ENCODE measurements at regions of chr7 and their contacts with region 1.

Region 1: DNA sequence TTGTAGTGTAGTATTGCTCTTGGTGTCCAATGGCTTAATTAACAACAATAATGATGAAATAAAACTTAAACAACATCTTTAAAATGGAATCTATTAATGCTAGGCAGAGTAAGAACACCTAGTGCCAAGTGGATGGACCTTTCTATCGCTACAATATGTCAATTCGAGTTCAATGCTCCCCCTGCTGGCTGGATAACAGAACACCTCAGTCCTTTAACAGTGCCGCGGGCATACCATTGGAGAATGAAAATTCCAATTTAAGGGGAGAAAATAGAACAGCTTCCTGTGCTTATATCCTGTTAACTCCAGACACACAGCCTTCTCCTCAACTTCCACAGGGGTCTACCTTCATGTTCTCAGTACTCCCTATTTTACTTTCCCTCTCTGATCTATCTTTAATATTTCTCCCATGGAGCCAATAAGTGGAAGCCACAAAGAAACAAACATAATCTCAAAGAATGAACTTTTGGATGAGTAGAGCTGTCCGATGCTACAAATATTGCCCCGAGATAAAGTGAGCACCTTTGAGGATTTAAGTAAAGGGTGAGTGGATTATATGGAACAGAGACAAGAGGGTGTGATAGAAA is 41.4 kb downstream of the COL1A2 start:
- DNase-seq: peak; percentile 69
- H3K4me3 ChIP-seq: no peak overlapping the region
- H3K27ac ChIP-seq: no peak overlapping the region
- H3K4me1 ChIP-seq: no peaks in the 10 kb centered on the region
- H3K27me3 ChIP-seq: peaks cover 0 to 4% of the 10 kb centered on the region in 2 experiments
- CTCF ChIP-seq: peak; percentile 73 to 83
- POLR2A ChIP-seq: no peak

Region 2: DNA sequence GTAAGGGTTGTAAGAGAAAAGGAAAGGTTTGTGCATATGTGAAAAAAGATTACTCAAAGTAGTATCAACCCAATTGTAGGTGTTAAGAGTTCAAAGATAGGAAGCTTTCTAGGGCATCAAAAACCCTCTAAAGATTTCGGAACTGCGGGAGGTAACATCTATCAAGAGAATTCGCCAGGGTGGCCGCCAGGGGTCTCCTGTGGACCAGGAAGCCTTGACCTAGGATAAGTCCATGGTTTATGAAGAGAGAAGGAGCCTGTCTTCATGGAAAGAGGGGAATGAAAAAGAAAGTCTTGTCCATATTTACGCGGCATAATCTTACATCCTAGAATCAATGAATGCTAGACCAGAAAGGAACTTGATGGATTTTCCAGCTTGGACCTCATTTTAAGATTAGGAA is 720.9 kb before region 1 on chr7:
- CTCF ChIA-PET with region 1: no interaction called
- POLR2A ChIA-PET with region 1: no interaction called
- dilution Hi-C with region 1: no loop called
- intact Hi-C with region 1: loop called (anchors 2 kb)
- DNase-seq: peak; percentile 58
- H3K4me3 ChIP-seq: no peak overlapping the region
- H3K27ac ChIP-seq: no peak overlapping the region
- H3K4me1 ChIP-seq: no peaks in the 10 kb centered on the region
- H3K27me3 ChIP-seq: peaks cover 15 to 26% of the 10 kb centered on the region in 2 experiments
- CTCF ChIP-seq: peak; percentile 71 to 72
- POLR2A ChIP-seq: no peak

Region 3: DNA sequence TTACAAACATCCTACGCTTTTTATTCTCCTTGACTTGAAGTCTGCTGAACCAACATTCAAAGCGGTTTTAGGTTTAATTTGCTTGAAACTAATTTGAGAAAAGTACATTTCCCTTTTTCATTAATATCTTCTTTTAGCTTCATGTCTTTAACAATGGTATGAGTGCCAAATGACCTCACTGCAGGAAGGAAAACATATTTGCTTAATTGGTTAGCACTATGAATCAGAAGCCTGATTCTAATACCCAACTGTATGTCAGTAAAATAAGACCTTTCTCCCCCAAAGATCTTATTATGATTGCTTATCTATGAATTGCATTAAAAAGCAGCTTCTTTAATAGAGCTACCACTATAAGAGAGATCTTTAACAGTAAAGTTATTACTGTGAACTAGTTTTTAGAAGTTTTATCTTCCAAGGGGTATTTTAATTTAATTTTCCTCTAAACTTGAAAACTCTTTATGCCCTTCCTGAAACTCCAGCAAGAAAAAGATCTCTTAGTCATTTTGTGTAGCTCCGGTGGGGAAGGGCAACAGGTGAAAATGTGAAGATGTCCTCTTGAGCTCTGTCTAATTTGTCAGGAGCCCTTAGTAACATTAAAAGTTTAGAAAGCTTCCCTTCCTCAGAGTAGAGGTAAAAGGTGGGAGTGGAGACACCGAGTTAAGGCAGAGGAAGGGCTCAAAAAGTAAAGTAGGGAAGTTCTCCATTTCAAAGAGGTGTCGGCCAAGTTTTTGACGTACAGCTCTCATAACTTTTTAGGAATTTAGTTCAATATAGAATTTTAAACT is 35.3 kb before region 1 on chr7:
- CTCF ChIA-PET with region 1: interaction called, 52 read pairs
- POLR2A ChIA-PET with region 1: no interaction called
- dilution Hi-C with region 1: no loop called
- intact Hi-C with region 1: no loop called
- DNase-seq: peak; percentile 53
- H3K4me3 ChIP-seq: no peak overlapping the region
- H3K27ac ChIP-seq: no peak overlapping the region
- H3K4me1 ChIP-seq: peaks cover 10% of the 10 kb centered on the region
- H3K27me3 ChIP-seq: no peaks in the 10 kb centered on the region
- CTCF ChIP-seq: no peak
- POLR2A ChIP-seq: no peak

Region 4: DNA sequence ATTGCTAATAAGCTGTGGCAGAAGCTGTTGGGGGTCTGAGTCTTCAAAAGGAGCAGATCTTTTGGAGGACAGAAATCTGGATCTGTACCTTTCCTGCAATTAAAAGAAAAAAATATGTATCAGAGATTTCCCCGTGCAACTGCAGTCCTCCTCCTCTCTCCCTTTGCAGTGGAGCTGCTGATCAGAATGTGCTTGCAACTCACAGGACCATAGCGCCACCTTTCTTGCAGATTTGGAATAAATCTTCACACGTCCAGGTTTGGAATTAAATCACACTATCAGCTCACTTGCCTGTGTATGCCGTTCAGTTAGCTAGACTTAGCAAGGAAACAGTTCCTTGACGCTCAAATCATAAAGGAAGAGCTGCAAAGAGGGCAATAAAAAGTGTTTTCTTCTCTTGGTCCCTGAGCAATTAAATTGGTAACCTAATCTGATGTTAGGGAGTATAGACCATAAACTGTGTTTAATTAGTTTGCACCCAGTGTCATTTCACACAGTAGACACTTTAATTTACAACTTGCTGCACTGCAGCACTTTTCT is 810.8 kb after region 1 on chr7:
- CTCF ChIA-PET with region 1: interaction called, 10 read pairs
- POLR2A ChIA-PET with region 1: no interaction called
- dilution Hi-C with region 1: no loop called
- intact Hi-C with region 1: no loop called
- DNase-seq: peak; percentile 71
- H3K4me3 ChIP-seq: no peak overlapping the region
- H3K27ac ChIP-seq: no peak overlapping the region
- H3K4me1 ChIP-seq: no peaks in the 10 kb centered on the region
- H3K27me3 ChIP-seq: no peaks in the 10 kb centered on the region
- CTCF ChIP-seq: peak; percentile 63 to 68
- POLR2A ChIP-seq: no peak